Motor neuron (in vitro differentiated cells): ENCODE measurements at regions of chr16 and their contacts with region 1.

Region 1: GRCh38 chr16:19907161-19907992 is 22.7 kb upstream of the GPRC5B start:
- ATAC-seq: peak; percentile 93 to 100 (median 96)
- H3K4me3 ChIP-seq: no peak overlapping the region
- H3K27ac ChIP-seq: no peak overlapping the region
- H3K4me1 ChIP-seq: no peaks in the 10 kb centered on the region

Region 2: GRCh38 chr16:19236561-19237209 is 670.7 kb before region 1 on chr16:
- in situ Hi-C with region 1: no loop called
- ATAC-seq: peak in 5 of 8 experiments; percentile 33 to 90 (median 54)
- H3K4me3 ChIP-seq: no peak overlapping the region
- H3K27ac ChIP-seq: no peak overlapping the region
- H3K4me1 ChIP-seq: no peaks in the 10 kb centered on the region

Region 3: GRCh38 chr16:19659554-19659953 is 247.8 kb before region 1 on chr16:
- in situ Hi-C with region 1: no loop called
- ATAC-seq: no peak
- H3K4me3 ChIP-seq: no peak overlapping the region
- H3K27ac ChIP-seq: no peak overlapping the region
- H3K4me1 ChIP-seq: no peaks in the 10 kb centered on the region

Region 4: GRCh38 chr16:19804538-19805323 is 102.6 kb before region 1 on chr16:
- in situ Hi-C with region 1: no loop called
- ATAC-seq: no peak
- H3K4me3 ChIP-seq: no peak overlapping the region
- H3K27ac ChIP-seq: no peak overlapping the region
- H3K4me1 ChIP-seq: no peaks in the 10 kb centered on the region

Region 5: GRCh38 chr16:20291208-20292206 is 384.1 kb after region 1 on chr16:
- in situ Hi-C with region 1: loop called in 2 of 9 experiments (anchors 25 kb)
- ATAC-seq: peak in 5 of 8 experiments; percentile 95 to 98 (median 96)
- H3K4me3 ChIP-seq: no peak overlapping the region
- H3K27ac ChIP-seq: peak overlapping the region; percentile 88 to 96
- H3K4me1 ChIP-seq: peaks cover 24 to 35% of the 10 kb centered on the region in 2 donors

Region 6: GRCh38 chr16:20300312-20301097 is 393.1 kb after region 1 on chr16:
- in situ Hi-C with region 1: loop called in 4 of 9 experiments (anchors 10 to 25 kb)
- ATAC-seq: peak; percentile 48 to 99 (median 74)
- H3K4me3 ChIP-seq: no peak overlapping the region
- H3K27ac ChIP-seq: no peak overlapping the region
- H3K4me1 ChIP-seq: peaks cover 0 to 5% of the 10 kb centered on the region in 2 donors

Region 7: GRCh38 chr16:20704281-20704680 is 796.9 kb after region 1 on chr16:
- in situ Hi-C with region 1: loop called in 1 of 9 experiments (anchors 25 kb)
- ATAC-seq: no peak
- H3K4me3 ChIP-seq: no peak overlapping the region
- H3K27ac ChIP-seq: no peak overlapping the region
- H3K4me1 ChIP-seq: no peaks in the 10 kb centered on the region